AG04449 (cell line): ENCODE measurements at regions of chr18 and their contacts with region 1.

Region 1: GRCh38 chr18:4096486-4096885 is 358.6 kb downstream of the DLGAP1 start:
- DNase-seq: no peak
- H3K4me3 ChIP-seq: no peak overlapping the region
- CTCF ChIP-seq: no peak

Region 2: DNA sequence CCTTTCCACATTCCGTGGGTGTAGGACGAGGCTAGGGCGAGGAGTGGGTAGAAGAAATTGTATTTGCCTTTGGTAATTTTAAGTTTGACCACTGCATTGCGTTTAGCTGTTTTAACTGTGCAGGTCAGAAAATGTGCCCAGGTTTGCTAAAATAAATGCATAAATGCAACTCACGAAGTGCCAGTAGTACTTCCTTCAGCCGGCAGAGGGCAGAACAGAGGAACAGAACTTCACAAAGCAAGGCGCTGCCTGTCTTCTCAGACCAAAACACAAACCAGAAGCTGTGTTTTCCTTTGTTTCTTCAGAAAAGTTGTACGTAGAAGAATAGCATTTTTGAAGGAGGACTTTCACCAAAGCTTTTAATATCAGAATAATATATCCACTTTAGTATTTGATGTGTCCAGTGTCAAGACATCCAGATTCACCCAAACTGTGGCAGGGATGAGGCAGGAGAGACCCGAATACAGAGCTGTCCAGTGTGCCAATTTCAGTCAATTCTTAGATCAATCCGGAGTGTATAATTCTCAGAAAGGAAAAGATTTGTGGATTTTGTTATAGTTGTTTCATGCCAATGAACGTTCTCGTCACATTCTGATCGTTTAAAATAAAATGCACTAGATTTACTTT is 10.0 kb after region 1 on chr18:
- CTCF ChIA-PET with region 1: interaction called, 24 read pairs
- POLR2A ChIA-PET with region 1: no interaction called
- DNase-seq: no peak
- H3K4me3 ChIP-seq: no peak overlapping the region
- CTCF ChIP-seq: peak; percentile 72